Activated CD4-positive, alpha-beta T cell treated with anti-CD3 and anti-CD28 coated beads, Interleukin-2, amount 10 ng/mL, durations not matched to agents 24 days and 14 days (primary cell): ENCODE measurements at regions of chr15 and their contacts with region 1.

Region 1: DNA sequence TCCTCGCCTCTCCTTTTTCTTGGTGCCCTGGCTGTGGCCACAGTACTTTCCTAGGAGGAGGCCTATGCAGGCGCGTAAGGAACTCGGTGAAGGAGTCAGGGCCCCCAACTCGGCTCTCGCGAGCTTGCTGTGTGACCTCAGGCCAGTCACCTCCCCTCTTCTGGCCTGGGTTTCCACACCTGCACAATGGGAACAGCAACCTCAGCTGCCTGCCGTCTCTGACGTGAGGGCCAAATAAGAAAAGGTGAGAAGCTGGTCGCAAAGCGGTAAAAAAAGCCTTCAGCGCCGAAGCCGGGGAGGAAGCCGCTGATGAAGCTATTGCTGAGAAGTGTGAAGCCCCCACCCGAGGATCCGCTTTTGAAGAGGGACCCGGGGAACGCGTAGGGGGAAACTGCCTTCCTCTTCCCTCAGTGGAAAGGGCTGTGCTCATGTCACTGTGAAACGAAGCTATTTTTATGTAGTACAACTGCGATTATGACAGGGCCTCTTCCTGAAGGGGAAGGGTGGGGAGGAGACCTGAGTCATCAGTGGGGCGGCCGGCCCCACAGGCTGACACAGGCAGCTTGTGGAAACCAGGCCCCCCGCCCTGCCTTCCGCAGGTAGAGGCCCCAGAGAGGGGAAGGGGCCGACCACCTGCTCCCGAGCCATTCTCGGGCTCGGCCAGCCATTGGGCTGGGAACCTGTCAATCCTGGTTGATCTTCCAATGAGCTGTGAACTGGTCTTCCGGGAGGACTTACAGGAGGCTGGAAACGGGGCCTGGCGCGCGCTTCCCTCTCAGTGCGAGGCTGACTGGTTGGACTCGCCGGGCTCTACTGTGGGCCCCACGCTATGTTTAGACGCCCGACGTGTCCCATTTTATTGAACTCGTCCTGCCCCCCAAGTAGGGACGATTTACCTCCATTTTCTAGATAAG is 18.0 kb upstream of the ANKDD1A start:
- DNase-seq: peak; percentile 99
- H3K4me3 Mint-ChIP-seq: peak overlapping the region; percentile 99
- H3K27ac Mint-ChIP-seq: peak overlapping the region; percentile 99
- H3K4me1 Mint-ChIP-seq: peaks cover 68% of the 10 kb centered on the region
- H3K27me3 Mint-ChIP-seq: no peaks in the 10 kb centered on the region

Region 2: DNA sequence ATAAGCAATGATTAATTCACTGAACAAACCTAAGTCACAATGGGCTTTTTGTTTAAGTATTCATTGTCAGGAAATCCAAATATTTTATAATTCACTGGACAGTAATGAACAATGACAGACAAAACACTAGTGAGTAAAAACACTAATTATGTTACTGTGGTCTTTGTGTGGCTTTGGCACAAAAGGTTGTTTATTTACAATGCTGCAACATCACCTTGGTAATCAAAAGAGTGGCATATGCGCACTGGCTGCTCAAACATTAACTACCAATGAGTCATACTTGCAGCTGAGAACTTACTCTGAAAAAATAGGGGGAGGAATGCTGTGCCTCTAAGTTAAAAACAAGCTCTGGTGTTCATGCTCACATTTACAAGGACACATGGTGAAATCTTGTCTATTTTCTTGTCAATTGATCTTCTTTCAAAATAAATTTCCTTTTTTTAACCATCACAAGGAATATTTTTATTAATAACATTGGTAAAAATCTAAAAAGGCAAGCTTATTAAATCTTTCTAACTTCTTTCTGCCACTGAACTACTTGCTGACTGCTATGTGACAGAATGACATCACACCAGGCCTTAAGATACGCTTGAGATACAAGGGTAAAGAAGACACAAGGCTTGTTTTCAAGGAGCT is 645.7 kb before region 1 on chr15:
- intact Hi-C with region 1: loop called (anchors 5 kb)
- DNase-seq: peak; percentile 79
- H3K4me3 Mint-ChIP-seq: no peak overlapping the region
- H3K27ac Mint-ChIP-seq: peak overlapping the region; percentile 64
- H3K4me1 Mint-ChIP-seq: peaks cover 38% of the 10 kb centered on the region
- H3K27me3 Mint-ChIP-seq: no peaks in the 10 kb centered on the region

Region 3: DNA sequence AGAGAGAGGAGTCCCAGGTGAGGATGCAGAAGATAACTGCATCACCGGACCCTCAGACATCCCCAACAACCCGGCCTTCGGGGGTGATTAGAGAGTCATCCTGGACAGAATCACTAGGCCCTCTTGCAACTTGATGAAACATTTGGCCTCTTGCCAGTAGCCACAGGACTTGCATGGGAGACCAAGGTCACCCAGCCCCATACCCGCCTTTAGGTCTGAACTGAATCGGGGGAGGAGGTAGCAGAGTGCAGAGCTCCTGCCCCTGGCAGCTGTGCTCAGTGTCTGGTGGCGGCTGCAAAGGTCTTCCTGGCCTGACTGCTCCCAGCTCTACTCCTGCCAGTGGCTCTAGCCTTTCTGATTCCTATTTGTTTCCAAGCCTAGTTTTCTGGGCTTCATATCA is 80.7 kb before region 1 on chr15:
- intact Hi-C with region 1: no loop called
- DNase-seq: no peak
- H3K4me3 Mint-ChIP-seq: no peak overlapping the region
- H3K27ac Mint-ChIP-seq: peak overlapping the region; percentile 6
- H3K4me1 Mint-ChIP-seq: peaks cover 3% of the 10 kb centered on the region
- H3K27me3 Mint-ChIP-seq: peaks cover 9% of the 10 kb centered on the region

Region 4: GRCh38 chr15:64825431-64826294 is 68.1 kb before region 1 on chr15 and contains the start of gene PIF1:
- intact Hi-C with region 1: loop called (anchors 1 kb)
- DNase-seq: peak; percentile 98
- H3K4me3 Mint-ChIP-seq: peak within 1 kb of the TSS; percentile 92
- H3K27ac Mint-ChIP-seq: peak within 1 kb of the TSS; percentile 93
- H3K4me1 Mint-ChIP-seq: peaks cover 37% of the 10 kb centered on the region
- H3K27me3 Mint-ChIP-seq: no peaks in the 10 kb centered on the region
- total RNA-seq, gene PIF1: 20.9 and 22.6 TPM in 2 replicates

Region 5: GRCh38 chr15:64841258-64842095 is 52.3 kb before region 1 on chr15 and contains the start of gene PLEKHO2:
- intact Hi-C with region 1: loop called (anchors 1 kb)
- DNase-seq: peak; percentile 97
- H3K4me3 Mint-ChIP-seq: peak within 1 kb of the TSS; percentile 88
- H3K27ac Mint-ChIP-seq: peak within 1 kb of the TSS; percentile 86
- H3K4me1 Mint-ChIP-seq: peaks cover 63% of the 10 kb centered on the region
- H3K27me3 Mint-ChIP-seq: no peaks in the 10 kb centered on the region
- total RNA-seq, gene PLEKHO2: 15.7 and 16.9 TPM in 2 replicates

Region 6: DNA sequence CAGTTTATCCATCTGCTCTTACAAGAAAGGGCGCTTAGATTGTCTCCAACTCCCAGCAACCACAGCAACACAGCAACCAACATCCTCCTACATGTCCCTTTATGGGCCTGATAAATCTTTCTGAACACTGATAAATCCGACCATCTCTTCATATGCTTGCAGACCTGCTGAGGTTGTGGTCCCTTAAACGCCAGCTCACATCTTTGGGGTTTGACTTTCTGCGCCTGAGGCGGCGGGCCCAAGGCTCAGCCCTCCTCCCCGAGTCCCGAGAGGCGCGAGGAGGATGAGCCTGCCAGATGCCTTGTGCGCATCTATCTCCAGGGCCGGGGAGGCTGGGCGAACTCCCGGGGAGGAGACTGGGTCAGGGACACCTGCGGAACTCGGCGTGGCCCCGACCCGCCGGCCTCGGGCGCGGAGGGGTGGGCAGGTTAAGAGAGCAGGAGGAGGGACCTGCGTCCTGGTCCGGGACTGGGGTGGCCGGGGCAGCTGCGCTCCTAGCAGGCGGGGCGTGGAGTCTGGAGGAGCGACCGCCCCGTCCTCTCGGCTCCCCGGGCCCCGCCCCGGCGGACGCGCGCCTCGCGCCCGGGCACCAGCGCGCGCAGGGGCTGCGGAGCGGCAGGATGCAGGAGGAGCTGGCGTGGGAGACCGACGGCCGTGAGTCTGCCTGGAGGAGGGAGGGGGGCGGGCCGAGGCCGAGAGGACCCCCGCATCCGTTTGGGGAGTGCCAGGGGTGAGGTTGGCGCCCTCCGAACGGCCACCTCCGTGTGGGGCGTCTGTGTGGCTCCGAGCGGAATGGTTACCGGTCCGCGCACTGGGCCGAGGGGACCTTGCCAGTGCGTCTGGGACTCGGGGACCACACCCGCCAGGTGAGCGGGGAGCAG is 17.8 kb after region 1 on chr15 and contains the start of gene ANKDD1A:
- intact Hi-C with region 1: loop called (anchors 2 kb)
- DNase-seq: peak; percentile 92
- H3K4me3 Mint-ChIP-seq: peak within 1 kb of the TSS; percentile 79
- H3K27ac Mint-ChIP-seq: no peak within 1 kb of the TSS
- H3K4me1 Mint-ChIP-seq: peaks cover 15% of the 10 kb centered on the region
- H3K27me3 Mint-ChIP-seq: peaks cover 23% of the 10 kb centered on the region
- total RNA-seq, gene ANKDD1A: 1.4 and 1.8 TPM in 2 replicates

Region 7: DNA sequence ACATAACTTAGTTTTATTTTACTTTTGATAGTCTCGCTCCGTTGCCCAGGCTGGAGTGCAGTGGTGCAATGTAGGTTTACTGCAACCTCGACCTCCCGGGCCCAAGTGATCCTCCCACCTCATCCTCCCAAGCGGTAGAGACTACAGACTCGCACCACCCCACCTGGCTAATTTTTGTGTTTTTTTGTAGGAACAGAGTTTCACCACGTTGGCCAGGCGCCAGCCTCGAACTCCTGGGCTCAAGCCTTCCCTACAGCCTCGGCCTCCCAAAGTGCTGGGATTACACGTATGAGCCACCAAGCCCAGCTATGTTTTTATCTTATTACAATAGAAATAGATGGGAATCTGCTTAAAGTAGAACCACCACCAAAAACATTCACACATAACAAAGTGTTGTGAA is 405.0 kb after region 1 on chr15:
- intact Hi-C with region 1: loop called (anchors 5 kb)
- DNase-seq: no peak
- H3K4me3 Mint-ChIP-seq: peak overlapping the region; percentile 85
- H3K27ac Mint-ChIP-seq: peak overlapping the region; percentile 93
- H3K4me1 Mint-ChIP-seq: peaks cover 26% of the 10 kb centered on the region
- H3K27me3 Mint-ChIP-seq: no peaks in the 10 kb centered on the region